H1 (cell line): ENCODE measurements at regions of chr1 and their contacts with region 1.

Region 1: DNA sequence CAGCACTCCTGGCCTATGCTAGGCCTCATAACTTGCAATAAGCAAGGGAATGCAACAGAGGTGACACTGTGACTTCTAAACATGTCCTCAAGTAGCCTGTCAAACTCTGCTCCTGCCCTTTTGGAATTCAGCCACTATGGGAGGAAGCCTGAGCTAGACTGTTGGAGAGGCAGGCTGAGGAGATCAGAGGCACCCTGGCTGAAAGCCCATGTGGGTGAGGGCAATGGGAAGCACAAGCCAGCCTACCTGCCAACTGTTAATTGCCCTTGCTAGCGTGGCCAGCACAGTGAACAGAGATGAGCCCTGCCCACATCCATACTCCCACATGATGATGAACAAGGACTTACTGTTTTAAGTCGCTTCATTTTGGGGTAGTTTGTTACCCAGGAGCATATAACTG is 17.7 kb downstream of the GNB1 start:
- DNase-seq: no peak
- H3K4me3 ChIP-seq: no peak overlapping the region
- H3K27ac ChIP-seq: 0 out of 2 replicates have a peak overlapping the region, but pooled peaks have one; percentile 32
- H3K4me1 ChIP-seq: no peaks in the 10 kb centered on the region; a peak in 1 of 7 replicates
- H3K27me3 ChIP-seq: no peaks in the 10 kb centered on the region
- CTCF ChIP-seq: no peak
- EP300 ChIP-seq: no peak
- POLR2A ChIP-seq: no peak
- RAD21 ChIP-seq: no peak

Region 2: GRCh38 chr1:1721201-1721600 is 152.0 kb before region 1 on chr1:
- CTCF ChIA-PET with region 1: no interaction called
- POLR2A ChIA-PET with region 1: no interaction called
- DNase-seq: no peak
- H3K4me3 ChIP-seq: no peak overlapping the region
- H3K27ac ChIP-seq: no peak overlapping the region
- H3K4me1 ChIP-seq: no peaks in the 10 kb centered on the region
- H3K27me3 ChIP-seq: no peaks in the 10 kb centered on the region
- CTCF ChIP-seq: no peak
- EP300 ChIP-seq: no peak
- POLR2A ChIP-seq: no peak
- RAD21 ChIP-seq: no peak

Region 3: GRCh38 chr1:1832166-1832565 is 41.0 kb before region 1 on chr1:
- CTCF ChIA-PET with region 1: interaction called, 13 read pairs
- POLR2A ChIA-PET with region 1: no interaction called
- DNase-seq: no peak
- H3K4me3 ChIP-seq: no peak overlapping the region
- H3K27ac ChIP-seq: no peak overlapping the region
- H3K4me1 ChIP-seq: no peaks in the 10 kb centered on the region; a peak in 1 of 7 replicates
- H3K27me3 ChIP-seq: no peaks in the 10 kb centered on the region
- CTCF ChIP-seq: no peak
- EP300 ChIP-seq: no peak
- POLR2A ChIP-seq: no peak
- RAD21 ChIP-seq: no peak

Region 4: DNA sequence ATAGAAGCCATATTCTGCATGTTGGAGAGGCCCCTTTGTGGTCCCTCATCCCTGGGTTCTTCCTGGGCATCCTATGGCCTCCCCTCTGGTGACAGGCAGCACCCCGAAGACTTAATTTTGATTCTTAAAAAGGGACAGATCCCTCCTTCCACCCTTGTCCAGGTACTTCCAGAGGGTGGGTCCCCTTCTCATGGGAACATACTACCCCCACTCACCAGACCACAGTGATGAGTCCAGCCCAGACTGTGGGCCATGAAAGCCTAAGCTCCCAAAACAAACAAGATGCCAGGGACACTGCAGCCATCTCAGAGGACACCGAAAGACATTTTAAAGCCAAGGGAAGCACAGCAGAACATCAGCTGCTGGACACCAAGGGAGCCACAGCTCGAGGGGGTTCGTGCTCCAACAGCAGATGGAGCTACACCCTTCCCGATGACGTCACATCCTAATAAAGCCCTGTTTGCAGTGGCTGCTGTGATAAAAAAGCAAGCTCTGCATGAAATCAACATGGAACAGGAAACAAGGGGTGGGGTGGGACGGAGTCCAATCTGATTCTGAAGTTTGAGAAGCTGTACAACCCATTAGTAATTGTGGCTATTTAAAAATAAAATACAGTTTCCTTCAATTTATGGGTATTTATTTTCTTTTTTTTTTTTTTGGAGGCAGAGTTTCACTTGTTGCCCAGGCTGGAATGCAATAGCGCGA is 14.7 kb before region 1 on chr1:
- CTCF ChIA-PET with region 1: interaction called, 10 read pairs
- POLR2A ChIA-PET with region 1: interaction called, 5 read pairs
- DNase-seq: no peak
- H3K4me3 ChIP-seq: no peak overlapping the region
- H3K27ac ChIP-seq: no peak overlapping the region
- H3K4me1 ChIP-seq: peaks cover 0 to 8% (median 4%) of the 10 kb centered on the region in 4 experiments; a peak in 3 of 7 replicates
- H3K27me3 ChIP-seq: no peaks in the 10 kb centered on the region
- CTCF ChIP-seq: peak; percentile 18 to 52 (median 50); a peak in 3 of 4 replicates
- EP300 ChIP-seq: no peak
- POLR2A ChIP-seq: no peak
- RAD21 ChIP-seq: peak; percentile 17 to 42; a peak in 2 of 4 replicates

Region 5: GRCh38 chr1:1883092-1883873 is 10.1 kb after region 1 on chr1:
- CTCF ChIA-PET with region 1: interaction called, 26 read pairs
- POLR2A ChIA-PET with region 1: interaction called, 33 read pairs
- DNase-seq: no peak
- H3K4me3 ChIP-seq: no peak overlapping the region
- H3K27ac ChIP-seq: no peak overlapping the region
- H3K4me1 ChIP-seq: peaks cover 0 to 9% (median 5%) of the 10 kb centered on the region in 4 experiments; a peak in 3 of 7 replicates
- H3K27me3 ChIP-seq: no peaks in the 10 kb centered on the region
- CTCF ChIP-seq: no peak
- EP300 ChIP-seq: no peak
- POLR2A ChIP-seq: no peak
- RAD21 ChIP-seq: no peak

Region 6: DNA sequence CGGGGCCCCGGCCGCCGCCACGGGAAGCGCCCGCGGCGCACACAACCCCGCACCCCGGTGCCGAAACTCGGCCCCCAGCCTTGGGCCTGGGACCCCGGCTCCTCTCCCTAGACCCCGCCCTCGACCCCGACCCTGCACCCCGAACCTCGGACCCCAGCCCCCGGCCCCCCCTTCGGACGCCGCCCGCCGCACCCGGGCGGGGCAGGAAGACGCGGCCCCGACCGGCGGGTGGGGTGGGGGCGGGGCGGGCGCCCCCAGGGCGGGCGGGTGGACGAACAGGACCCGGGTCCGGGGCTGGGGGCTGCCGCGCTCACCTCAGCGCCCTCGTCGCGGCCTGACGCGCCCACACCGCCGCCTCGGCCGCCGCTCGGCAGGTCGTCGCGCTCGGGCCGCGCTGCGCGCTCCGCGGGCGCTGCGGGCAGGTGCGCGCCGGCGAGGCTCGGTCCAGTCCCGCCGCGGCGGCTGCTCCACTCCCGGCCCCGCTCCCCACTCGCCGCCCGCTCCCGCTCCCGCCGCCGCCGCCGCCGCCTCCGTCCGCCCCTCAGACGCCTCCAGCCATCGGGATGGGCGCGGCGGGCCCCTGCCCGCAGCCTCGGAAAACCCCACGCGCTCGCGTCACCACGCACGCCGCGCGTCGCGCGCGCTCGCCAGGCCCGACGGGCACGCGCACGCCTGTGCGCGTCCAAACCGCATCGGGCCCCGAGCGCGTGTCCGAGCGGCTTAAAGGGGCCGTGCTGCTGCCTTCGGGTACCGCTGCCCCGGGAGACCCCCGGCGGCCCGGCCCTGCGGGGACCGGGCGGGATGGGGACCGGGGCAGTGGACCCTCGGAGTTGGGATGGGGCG is 17.5 kb after region 1 on chr1 and contains the start of gene GNB1:
- CTCF ChIA-PET with region 1: interaction called, 16 read pairs
- POLR2A ChIA-PET with region 1: interaction called, 32 read pairs
- DNase-seq: peak; percentile 53 to 90
- H3K4me3 ChIP-seq: peak within 1 kb of the TSS; percentile 76 to 98 (median 89)
- H3K27ac ChIP-seq: peak within 1 kb of the TSS; percentile 55; the same call in 1 of the 2 replicates
- H3K4me1 ChIP-seq: peaks cover 0 to 22% (median 16%) of the 10 kb centered on the region in 4 experiments; a peak in 6 of 7 replicates
- H3K27me3 ChIP-seq: no peaks in the 10 kb centered on the region; a peak in 3 of 7 replicates
- CTCF ChIP-seq: no peak
- EP300 ChIP-seq: peak in 1 of 2 experiments; percentile 36; a peak in 1 of 3 replicates
- POLR2A ChIP-seq: no peak
- RAD21 ChIP-seq: no peak
- total RNA-seq, gene GNB1: 382 and 394 TPM in 2 replicates